ENCODE measurements at regions of chr7 and their contacts with region 1.

Region 1: GRCh38 chr7:142323706-142324105 is 65.8 kb upstream of the PRSS58 start:
- DNase-seq: peak; percentile 36
- ATAC-seq: peak; percentile 91
- H3K4me3 ChIP-seq: no peak overlapping the region
- H3K27ac ChIP-seq: no peak overlapping the region
- H3K4me1 ChIP-seq: peaks cover 0 to 11% of the 10 kb centered on the region in 2 experiments; a peak in 1 of 4 replicates
- H3K27me3 ChIP-seq: no peaks in the 10 kb centered on the region
- CTCF ChIP-seq: peak; percentile 62 to 82 (median 79)
- POLR2A ChIP-seq: no peak
- RAD21 ChIP-seq: peak; percentile 58

Region 2: GRCh38 chr7:142301923-142302550 is 21.7 kb before region 1 on chr7:
- CTCF ChIA-PET with region 1: interaction called, 33 read pairs
- POLR2A ChIA-PET with region 1: no interaction called
- RAD21 ChIA-PET with region 1: no interaction called
- intact Hi-C with region 1: no loop called
- DNase-seq: peak; percentile 22
- ATAC-seq: peak; percentile 43
- H3K4me3 ChIP-seq: no peak overlapping the region
- H3K27ac ChIP-seq: no peak overlapping the region
- H3K4me1 ChIP-seq: no peaks in the 10 kb centered on the region
- H3K27me3 ChIP-seq: no peaks in the 10 kb centered on the region
- CTCF ChIP-seq: peak; percentile 62 to 68 (median 64)
- POLR2A ChIP-seq: no peak
- RAD21 ChIP-seq: peak; percentile 43

Region 3: GRCh38 chr7:142313528-142313927 is 10.2 kb before region 1 on chr7:
- CTCF ChIA-PET with region 1: interaction called, 17 read pairs
- POLR2A ChIA-PET with region 1: no interaction called
- RAD21 ChIA-PET with region 1: no interaction called
- intact Hi-C with region 1: no loop called
- DNase-seq: no peak
- ATAC-seq: no peak
- H3K4me3 ChIP-seq: no peak overlapping the region
- H3K27ac ChIP-seq: no peak overlapping the region
- H3K4me1 ChIP-seq: no peaks in the 10 kb centered on the region
- H3K27me3 ChIP-seq: peaks cover 12% of the 10 kb centered on the region; the same call in 1 of the 2 replicates
- CTCF ChIP-seq: no peak
- POLR2A ChIP-seq: no peak
- RAD21 ChIP-seq: no peak

Region 4: DNA sequence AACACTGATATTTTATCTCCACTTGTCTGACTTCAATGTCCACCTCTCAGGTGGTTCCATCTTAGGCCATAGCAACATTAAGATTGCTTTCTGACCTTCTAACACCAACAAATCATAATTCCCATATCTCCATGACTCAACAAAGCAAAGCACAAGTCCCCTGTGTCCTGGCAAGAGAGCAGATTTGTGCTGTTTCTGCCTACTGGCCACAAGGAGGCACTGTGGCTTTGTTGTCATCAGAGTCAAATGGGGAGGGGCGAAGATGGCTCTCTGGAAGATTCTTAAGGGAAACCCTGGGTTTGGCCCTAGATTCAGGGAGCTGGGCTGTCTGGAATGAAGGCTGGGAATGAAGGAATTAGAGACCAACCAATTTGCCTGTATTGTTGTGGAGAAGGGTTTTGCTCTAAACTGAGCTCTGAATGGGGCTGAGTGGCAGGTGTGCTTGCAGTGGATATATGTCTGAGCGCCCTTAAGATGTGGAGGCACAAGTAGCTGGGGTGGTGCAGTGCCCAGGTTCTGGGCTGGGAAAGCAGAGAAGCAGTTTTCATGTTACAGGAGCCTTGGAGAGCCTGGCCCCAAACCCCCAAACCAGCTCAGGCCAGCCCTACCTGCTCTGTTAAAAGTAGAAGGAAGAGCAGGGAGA is 89.0 kb after region 1 on chr7:
- CTCF ChIA-PET with region 1: no interaction called
- POLR2A ChIA-PET with region 1: no interaction called
- RAD21 ChIA-PET with region 1: no interaction called
- intact Hi-C with region 1: no loop called
- DNase-seq: peak; percentile 69
- ATAC-seq: peak; percentile 96
- H3K4me3 ChIP-seq: no peak overlapping the region
- H3K27ac ChIP-seq: no peak overlapping the region
- H3K4me1 ChIP-seq: peaks cover 0 to 12% of the 10 kb centered on the region in 2 experiments; a peak in 2 of 4 replicates
- H3K27me3 ChIP-seq: no peaks in the 10 kb centered on the region
- CTCF ChIP-seq: peak; percentile 69 to 94 (median 89); a peak in 5 of 6 replicates
- POLR2A ChIP-seq: no peak
- RAD21 ChIP-seq: peak; percentile 55